ENCODE measurements at regions of chr15 and their contacts with region 1.

Region 1: DNA sequence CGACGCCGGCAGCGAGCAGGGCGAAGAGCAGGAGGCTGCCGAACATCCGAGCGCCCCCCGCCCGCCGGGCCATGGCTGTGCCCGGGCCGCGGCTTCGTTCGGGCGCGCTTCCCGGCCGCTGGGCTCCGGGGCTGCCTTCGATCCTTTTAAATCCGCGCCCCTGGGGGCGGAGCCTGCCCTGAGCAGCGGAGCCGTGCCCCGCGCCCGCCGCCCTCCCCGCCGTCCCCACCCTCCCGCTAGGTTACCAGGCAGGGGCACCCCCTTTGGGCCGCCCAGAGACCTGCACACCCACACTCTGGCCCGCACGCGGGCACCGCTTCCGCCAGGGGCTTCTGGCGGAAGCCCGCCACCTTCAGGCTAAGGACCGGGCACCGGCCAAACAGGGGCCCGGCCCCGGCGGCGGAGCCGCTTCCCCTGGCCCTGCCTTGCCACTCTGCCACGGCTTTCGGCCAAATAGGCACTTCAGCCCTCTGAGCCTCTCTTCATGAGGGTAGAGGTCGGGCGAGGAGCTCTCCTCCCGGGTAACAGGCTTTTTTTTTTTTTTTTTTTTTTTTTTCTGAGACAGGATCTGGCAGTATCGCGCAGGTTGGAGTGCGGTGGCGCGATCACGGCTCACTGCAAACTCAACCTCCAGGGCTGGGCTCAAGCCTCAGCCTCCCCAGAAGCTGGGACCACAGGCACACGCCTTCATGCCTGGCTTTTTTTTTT is at the start of gene NMB:
- DNase-seq: peak; percentile 93
- ATAC-seq: peak; percentile 76
- H3K4me3 ChIP-seq: peak within 1 kb of the TSS; percentile 38 to 86 (median 63)
- H3K4me3 Mint-ChIP-seq: peak within 1 kb of the TSS; percentile 83
- H3K27ac ChIP-seq: peak within 1 kb of the TSS; percentile 63 to 69
- H3K27ac Mint-ChIP-seq: peak within 1 kb of the TSS; percentile 87
- H3K4me1 ChIP-seq: peaks cover 22 to 30% of the 10 kb centered on the region in 2 donors
- H3K4me1 Mint-ChIP-seq: peaks cover 32% of the 10 kb centered on the region
- H3K27me3 ChIP-seq: no peaks in the 10 kb centered on the region
- H3K27me3 Mint-ChIP-seq: no peaks in the 10 kb centered on the region
- CTCF ChIP-seq: peak; percentile 78
- total RNA-seq, gene NMB: 3.0 and 5.0 TPM in 2 replicates

Region 2: GRCh38 chr15:84633311-84634227 is 24.7 kb before region 1 on chr15:
- CTCF ChIA-PET with region 1: interaction called, 21 read pairs
- POLR2A ChIA-PET with region 1: interaction called, 23 read pairs
- intact Hi-C with region 1: loop called (anchors 1 kb)
- DNase-seq: peak; percentile 82
- ATAC-seq: peak; percentile 56
- H3K4me3 ChIP-seq: peak overlapping the region; percentile 61 to 71 (median 65)
- H3K4me3 Mint-ChIP-seq: peak overlapping the region; percentile 97
- H3K27ac ChIP-seq: peak overlapping the region; percentile 50 to 71
- H3K27ac Mint-ChIP-seq: peak overlapping the region; percentile 95
- H3K4me1 ChIP-seq: peaks cover 26 to 41% of the 10 kb centered on the region in 2 donors
- H3K4me1 Mint-ChIP-seq: peaks cover 41% of the 10 kb centered on the region
- H3K27me3 ChIP-seq: no peaks in the 10 kb centered on the region
- H3K27me3 Mint-ChIP-seq: no peaks in the 10 kb centered on the region
- CTCF ChIP-seq: no peak

Region 3: GRCh38 chr15:84734794-84735479 is 76.7 kb after region 1 on chr15:
- CTCF ChIA-PET with region 1: interaction called, 5 read pairs
- POLR2A ChIA-PET with region 1: interaction called, 6 read pairs
- intact Hi-C with region 1: loop called (anchors 1 kb)
- DNase-seq: peak; percentile 91
- ATAC-seq: peak; percentile 91
- H3K4me3 ChIP-seq: peak overlapping the region; percentile 0 to 58 (median 39)
- H3K4me3 Mint-ChIP-seq: peak overlapping the region; percentile 77
- H3K27ac ChIP-seq: peak overlapping the region; percentile 45 to 61
- H3K27ac Mint-ChIP-seq: peak overlapping the region; percentile 87
- H3K4me1 ChIP-seq: peaks cover 39 to 55% of the 10 kb centered on the region in 2 donors
- H3K4me1 Mint-ChIP-seq: peaks cover 40% of the 10 kb centered on the region
- H3K27me3 ChIP-seq: no peaks in the 10 kb centered on the region
- H3K27me3 Mint-ChIP-seq: no peaks in the 10 kb centered on the region
- CTCF ChIP-seq: no peak

Region 4: DNA sequence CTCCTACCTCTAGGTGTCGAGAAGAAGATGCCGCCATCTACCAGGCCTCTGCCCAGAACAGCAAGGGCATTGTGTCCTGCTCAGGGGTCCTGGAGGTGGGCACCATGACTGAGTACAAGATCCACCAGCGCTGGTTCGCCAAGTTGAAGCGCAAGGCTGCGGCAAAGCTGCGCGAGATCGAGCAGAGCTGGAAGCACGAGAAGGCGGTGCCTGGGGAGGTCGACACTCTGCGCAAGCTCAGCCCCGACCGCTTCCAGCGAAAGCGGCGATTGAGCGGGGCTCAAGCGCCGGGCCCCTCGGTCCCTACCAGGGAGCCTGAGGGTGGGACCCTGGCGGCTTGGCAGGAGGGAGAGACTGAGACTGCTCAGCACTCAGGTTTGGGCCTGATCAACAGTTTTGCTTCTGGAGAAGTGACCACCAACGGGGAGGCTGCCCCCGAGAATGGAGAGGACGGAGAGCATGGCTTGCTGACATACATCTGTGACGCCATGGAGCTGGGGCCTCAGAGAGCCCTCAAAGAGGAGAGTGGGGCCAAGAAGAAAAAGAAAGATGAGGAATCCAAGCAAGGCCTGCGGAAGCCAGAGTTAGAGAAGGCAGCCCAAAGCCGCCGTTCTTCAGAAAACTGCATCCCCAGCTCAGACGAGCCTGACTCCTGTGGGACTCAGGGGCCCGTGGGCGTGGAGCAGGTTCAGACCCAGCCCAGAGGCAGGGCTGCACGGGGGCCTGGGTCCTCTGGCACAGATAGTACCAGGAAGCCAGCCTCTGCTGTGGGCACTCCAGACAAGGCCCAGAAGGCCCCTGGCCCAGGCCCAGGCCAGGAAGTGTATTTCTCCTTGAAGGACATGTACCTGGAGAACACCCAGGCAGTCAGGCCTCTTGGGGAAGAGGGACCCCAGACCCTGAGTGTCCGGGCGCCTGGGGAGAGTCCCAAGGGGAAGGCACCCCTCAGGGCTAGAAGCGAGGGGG is 181.7 kb after region 1 on chr15:
- CTCF ChIA-PET with region 1: no interaction called
- POLR2A ChIA-PET with region 1: interaction called, 12 read pairs
- intact Hi-C with region 1: no loop called
- DNase-seq: no peak
- ATAC-seq: no peak
- H3K4me3 ChIP-seq: no peak overlapping the region
- H3K4me3 Mint-ChIP-seq: no peak overlapping the region
- H3K27ac ChIP-seq: no peak overlapping the region
- H3K27ac Mint-ChIP-seq: no peak overlapping the region
- H3K4me1 ChIP-seq: no peaks in the 10 kb centered on the region
- H3K4me1 Mint-ChIP-seq: no peaks in the 10 kb centered on the region
- H3K27me3 ChIP-seq: no peaks in the 10 kb centered on the region
- H3K27me3 Mint-ChIP-seq: peaks cover 24% of the 10 kb centered on the region
- CTCF ChIP-seq: no peak

Region 5: GRCh38 chr15:84981054-84981710 is 322.9 kb after region 1 on chr15:
- CTCF ChIA-PET with region 1: no interaction called
- POLR2A ChIA-PET with region 1: interaction called, 9 read pairs
- intact Hi-C with region 1: loop called (anchors 1 kb)
- DNase-seq: peak; percentile 98
- ATAC-seq: peak; percentile 72
- H3K4me3 ChIP-seq: peak overlapping the region; percentile 66 to 97 (median 79)
- H3K4me3 Mint-ChIP-seq: peak overlapping the region; percentile 96
- H3K27ac ChIP-seq: peak overlapping the region; percentile 97
- H3K27ac Mint-ChIP-seq: peak overlapping the region; percentile 97
- H3K4me1 ChIP-seq: peaks cover 21 to 22% of the 10 kb centered on the region in 2 donors
- H3K4me1 Mint-ChIP-seq: peaks cover 41% of the 10 kb centered on the region
- H3K27me3 ChIP-seq: no peaks in the 10 kb centered on the region
- H3K27me3 Mint-ChIP-seq: no peaks in the 10 kb centered on the region
- CTCF ChIP-seq: no peak

Region 6: DNA sequence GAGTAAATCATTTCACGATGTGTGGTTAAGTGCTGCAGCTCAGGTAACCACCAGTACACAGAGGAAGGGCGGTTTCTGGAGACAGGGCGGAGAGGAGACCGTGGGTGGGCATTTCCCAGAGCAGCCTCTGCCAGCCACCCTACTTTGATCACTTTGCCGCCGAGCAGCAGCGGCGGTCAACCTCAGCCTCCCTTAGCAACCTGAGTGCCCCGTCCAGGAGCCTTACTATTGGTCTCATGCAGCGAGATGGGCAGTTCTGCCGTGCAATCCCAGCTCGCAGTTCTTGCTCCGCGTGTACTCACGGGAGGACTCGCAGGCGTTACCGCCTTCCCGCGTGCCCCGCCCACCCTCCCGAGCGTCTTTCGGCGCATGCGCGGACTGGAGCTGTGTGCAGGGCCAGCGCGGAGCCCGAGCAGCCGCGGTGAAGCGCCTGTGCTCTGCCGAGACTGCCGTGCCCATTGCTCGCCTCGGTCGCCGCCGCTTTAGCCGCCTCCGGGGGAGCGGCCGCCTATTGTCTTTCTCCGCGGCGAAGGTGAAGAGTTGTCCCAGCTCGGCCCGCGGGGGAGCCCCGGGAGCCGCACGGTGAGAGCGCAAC is 722.1 kb after region 1 on chr15 and contains the start of gene AKAP13:
- CTCF ChIA-PET with region 1: no interaction called
- POLR2A ChIA-PET with region 1: no interaction called
- intact Hi-C with region 1: no loop called
- DNase-seq: peak; percentile 97
- ATAC-seq: peak; percentile 78
- H3K4me3 ChIP-seq: peak within 1 kb of the TSS; percentile 65 to 90 (median 69)
- H3K4me3 Mint-ChIP-seq: peak within 1 kb of the TSS; percentile 86
- H3K27ac ChIP-seq: peak within 1 kb of the TSS; percentile 79 to 85
- H3K27ac Mint-ChIP-seq: peak within 1 kb of the TSS; percentile 90
- H3K4me1 ChIP-seq: peaks cover 35 to 42% of the 10 kb centered on the region in 2 donors
- H3K4me1 Mint-ChIP-seq: peaks cover 44% of the 10 kb centered on the region
- H3K27me3 ChIP-seq: peaks cover 0 to 4% (median 0%) of the 10 kb centered on the region in 4 experiments
- H3K27me3 Mint-ChIP-seq: peaks cover 4% of the 10 kb centered on the region
- CTCF ChIP-seq: no peak
- total RNA-seq, gene AKAP13: 358 and 380 TPM in 2 replicates

Measured in B cell (primary cell).